Activated CD8-positive, alpha-beta T cell treated with anti-CD3 and anti-CD28 coated beads for 36 hours (primary cell): ENCODE measurements at regions of chr9 and their contacts with region 1.

Region 1: DNA sequence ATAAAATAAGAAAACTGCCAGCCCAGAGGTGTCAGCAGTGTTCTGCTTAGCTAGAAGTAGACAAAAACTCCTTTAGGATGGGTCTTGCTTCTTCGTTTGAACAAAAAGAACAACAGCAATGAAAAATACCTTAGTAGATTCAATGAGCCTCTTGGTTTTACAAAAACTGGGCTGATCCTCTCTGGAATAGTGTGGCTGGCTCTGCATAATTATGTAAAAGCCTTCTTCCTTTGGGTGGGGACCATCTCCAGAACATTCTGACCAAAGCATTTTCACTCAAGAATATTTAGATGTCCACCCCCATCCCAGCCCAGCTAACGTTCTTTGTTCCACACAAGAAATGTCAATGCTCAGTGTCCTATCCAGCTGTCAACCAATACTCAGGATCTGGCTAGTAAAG is 63.2 kb downstream of the LRSAM1 start:
- DNase-seq: no peak
- ATAC-seq: no peak
- H3K4me3 Mint-ChIP-seq: no peak overlapping the region
- H3K27ac Mint-ChIP-seq: no peak overlapping the region
- H3K4me1 Mint-ChIP-seq: peaks cover 3% of the 10 kb centered on the region
- H3K27me3 Mint-ChIP-seq: no peaks in the 10 kb centered on the region
- CTCF ChIP-seq: no peak

Region 2: DNA sequence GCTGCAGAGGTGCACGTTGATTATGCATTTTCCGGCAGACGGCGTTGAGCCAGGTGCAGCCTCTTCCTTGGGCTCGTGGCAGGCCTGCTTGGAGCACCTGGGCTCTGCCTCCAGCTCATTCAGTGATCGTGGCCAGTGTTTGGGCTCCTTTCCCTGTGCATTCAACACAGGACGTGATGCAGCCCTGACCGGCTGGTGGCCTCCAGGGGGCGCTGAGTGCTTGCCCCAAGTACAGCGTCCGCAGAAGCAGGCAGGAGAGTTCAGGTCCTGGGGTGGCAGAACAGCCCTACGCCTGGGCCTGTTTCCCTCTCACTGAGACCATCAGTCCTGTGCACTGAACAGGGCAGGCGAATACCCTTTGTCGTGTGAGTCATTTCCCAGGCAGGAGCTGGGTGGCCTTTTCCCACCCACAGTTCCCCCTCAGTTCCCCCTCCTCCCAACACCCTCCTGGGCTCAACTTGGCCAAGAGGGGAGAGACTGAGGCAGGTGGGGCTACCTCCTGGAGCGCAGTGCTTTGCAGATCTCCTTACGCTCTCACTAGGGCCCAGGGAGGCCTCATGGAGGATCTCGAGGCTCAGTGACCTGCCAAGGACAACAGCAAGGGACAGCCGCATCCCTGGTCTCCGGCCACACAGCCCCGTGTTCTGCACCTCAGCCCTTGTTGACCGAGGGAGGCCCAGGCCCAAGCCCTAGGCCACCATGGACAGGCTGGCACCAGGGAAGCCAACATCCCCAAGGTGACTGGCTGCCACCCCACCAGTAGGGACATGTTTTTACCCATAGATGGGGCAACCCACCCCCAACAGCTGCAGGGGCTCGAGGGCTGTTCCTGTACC is 10.3 kb before region 1 on chr9:
- CTCF ChIA-PET with region 1: interaction called, 10 read pairs
- POLR2A ChIA-PET with region 1: interaction called, 3 read pairs
- intact Hi-C with region 1: no loop called
- DNase-seq: peak; percentile 92
- ATAC-seq: peak; percentile 94
- H3K4me3 Mint-ChIP-seq: no peak overlapping the region
- H3K27ac Mint-ChIP-seq: no peak overlapping the region
- H3K4me1 Mint-ChIP-seq: no peaks in the 10 kb centered on the region
- H3K27me3 Mint-ChIP-seq: no peaks in the 10 kb centered on the region
- CTCF ChIP-seq: peak; percentile 88